ENCODE measurements at regions of chr12 and their contacts with region 1.

Region 1: DNA sequence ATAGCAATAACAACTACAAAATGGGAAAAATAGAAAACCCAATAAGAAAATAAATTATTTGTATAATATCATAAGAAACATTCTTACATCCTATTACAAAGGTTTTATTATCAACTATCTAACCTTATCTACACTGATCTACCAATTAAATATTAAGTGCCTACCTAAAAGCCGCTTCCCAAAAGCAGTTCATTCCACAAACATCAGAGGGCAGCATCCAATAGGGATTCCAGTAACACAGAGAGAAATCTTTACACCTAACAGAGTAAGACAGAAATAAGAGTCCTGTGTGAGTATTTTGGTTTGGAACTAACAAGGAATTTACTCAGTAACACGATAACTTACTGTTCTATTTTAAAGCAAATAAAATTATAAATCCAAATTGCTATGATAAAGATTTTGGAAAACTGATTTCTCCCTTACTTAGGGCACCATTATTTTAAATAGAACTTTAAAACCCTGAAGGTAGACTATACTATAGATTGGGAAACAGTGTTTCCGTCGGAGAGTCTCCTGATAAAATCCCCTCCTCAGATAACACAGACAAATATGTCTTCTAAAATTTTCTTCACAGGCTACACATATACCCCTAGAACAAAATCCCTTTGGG is 15.0 kb downstream of the GXYLT1 start:
- DNase-seq: no peak
- H3K4me3 ChIP-seq: no peak overlapping the region
- H3K27ac ChIP-seq: no peak overlapping the region
- H3K4me1 ChIP-seq: peaks cover 12% of the 10 kb centered on the region
- H3K27me3 ChIP-seq: no peaks in the 10 kb centered on the region
- CTCF ChIP-seq: peak; percentile 54 to 90 (median 67)
- POLR2A ChIP-seq: no peak

Region 2: GRCh38 chr12:40864891-40865290 is 1264.8 kb before region 1 on chr12:
- intact Hi-C with region 1: no loop called
- DNase-seq: no peak
- H3K4me3 ChIP-seq: no peak overlapping the region
- H3K27ac ChIP-seq: no peak overlapping the region
- H3K4me1 ChIP-seq: no peaks in the 10 kb centered on the region
- H3K27me3 ChIP-seq: no peaks in the 10 kb centered on the region
- CTCF ChIP-seq: no peak
- POLR2A ChIP-seq: no peak

Region 3: DNA sequence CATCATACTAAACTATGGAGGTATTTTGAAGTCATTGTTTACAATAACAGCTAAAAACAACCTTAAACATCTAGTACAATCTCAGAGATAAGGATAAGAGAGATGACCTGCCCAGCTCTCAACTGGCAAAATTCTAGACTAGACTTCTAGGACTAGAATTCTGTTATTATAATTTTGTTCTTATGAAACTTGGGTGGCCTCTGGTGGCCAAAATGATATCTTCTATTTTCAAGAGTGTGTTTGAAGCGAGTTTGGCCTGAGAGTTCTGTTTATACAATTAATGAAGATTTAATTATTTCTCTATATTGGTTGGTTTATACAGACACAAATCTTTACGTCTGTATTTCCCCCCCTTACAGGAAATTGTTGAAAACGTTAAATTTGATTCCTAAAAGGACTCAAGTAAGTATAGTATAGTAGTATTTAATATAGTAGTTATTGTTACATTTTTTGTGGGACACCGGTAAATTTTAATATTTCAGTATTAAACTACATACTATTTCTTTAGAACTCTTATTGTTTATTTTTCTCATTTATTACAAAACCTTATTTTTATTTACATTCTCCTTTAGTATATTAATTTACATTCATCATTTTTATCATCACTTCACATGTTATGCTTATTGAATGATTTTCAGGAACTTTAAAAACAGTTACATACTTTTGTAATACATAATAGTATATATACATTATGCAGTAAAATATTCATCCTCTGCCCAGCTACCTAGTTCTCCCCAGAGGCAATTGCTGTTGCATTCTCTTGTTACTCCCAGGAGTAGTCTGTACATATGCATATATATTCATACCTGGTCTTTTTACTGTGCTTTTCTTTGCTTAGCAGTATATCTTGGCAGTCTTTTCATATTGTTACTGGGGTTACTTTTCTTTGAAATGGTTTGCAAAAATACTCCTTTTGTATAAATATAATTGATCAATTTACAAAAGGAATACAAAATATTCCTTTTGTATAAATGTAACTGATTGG is 202.9 kb after region 1 on chr12:
- intact Hi-C with region 1: loop called (anchors 5 kb)
- DNase-seq: no peak
- H3K4me3 ChIP-seq: no peak overlapping the region
- H3K27ac ChIP-seq: no peak overlapping the region
- H3K4me1 ChIP-seq: peaks cover 15% of the 10 kb centered on the region
- H3K27me3 ChIP-seq: no peaks in the 10 kb centered on the region
- CTCF ChIP-seq: peak in 2 of 3 experiments; percentile 34 to 64
- POLR2A ChIP-seq: no peak